Naive thymus-derived CD4-positive, alpha-beta T cell (primary cell): ENCODE measurements at regions of chr10 and their contacts with region 1.

Region 1: GRCh38 chr10:69061305-69062161 is 26.4 kb upstream of the SRGN start:
- DNase-seq: peak in 7 of 9 donors; percentile 17 to 52 (median 50)
- ATAC-seq: peak; percentile 72
- H3K4me3 ChIP-seq: peak overlapping the region; percentile 15
- H3K4me3 Mint-ChIP-seq: peak overlapping the region; percentile 73 to 90 (median 83)
- H3K27ac ChIP-seq: peak overlapping the region; percentile 50
- H3K27ac Mint-ChIP-seq: peak overlapping the region; percentile 70 to 96 (median 90)
- H3K4me1 ChIP-seq: peaks cover 25% of the 10 kb centered on the region in 2 donors
- H3K4me1 Mint-ChIP-seq: peaks cover 33 to 60% (median 38%) of the 10 kb centered on the region in 7 donors
- H3K27me3 ChIP-seq: no peaks in the 10 kb centered on the region
- H3K27me3 Mint-ChIP-seq: no peaks in the 10 kb centered on the region

Region 2: DNA sequence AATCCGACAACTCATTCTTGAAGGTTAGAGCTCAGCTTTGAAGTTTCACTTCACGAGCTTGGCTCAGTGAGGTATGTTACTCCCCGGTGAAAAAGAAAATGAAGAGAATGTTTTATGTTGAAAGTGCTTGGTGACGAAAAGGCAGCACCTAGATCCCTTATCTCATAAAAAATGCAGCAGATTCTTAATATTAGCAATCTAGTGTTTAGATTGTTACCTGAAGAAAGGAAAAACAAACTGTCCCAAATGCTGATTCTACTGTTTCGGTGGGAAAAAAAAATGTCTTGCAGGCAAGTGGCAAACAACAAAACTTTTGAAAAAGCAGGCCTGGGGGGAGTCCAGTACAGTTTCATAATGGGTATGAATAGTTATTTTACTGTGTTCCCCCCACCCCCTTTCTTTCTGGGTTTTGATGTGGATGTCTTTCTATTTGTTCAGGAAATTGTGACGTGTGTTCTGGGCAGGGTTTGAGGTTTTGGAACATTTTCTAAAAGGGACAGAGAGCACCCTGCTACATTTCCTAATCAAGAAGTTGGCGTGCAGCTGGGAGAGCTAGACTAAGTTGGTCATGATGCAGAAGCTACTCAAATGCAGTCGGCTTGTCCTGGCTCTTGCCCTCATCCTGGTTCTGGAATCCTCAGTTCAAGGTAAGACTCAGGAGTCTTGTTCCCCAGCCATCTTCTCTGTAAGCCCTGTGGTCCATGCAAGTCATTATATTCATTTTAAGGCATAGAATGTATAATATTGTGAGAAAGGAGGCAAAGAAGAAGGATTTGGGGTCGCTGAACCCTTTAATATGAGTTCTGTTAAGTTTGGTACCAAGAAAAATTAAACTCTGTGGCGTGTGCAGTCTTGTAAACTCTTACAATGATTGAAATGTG is 26.3 kb after region 1 on chr10 and contains the start of gene SRGN:
- CTCF ChIA-PET with region 1: interaction called, 5 read pairs
- POLR2A ChIA-PET with region 1: interaction called, 7 read pairs
- intact Hi-C with region 1: loop called (anchors 1 to 2 kb)
- DNase-seq: peak; percentile 54 to 94 (median 87)
- ATAC-seq: peak; percentile 76
- H3K4me3 ChIP-seq: peak within 1 kb of the TSS; percentile 84
- H3K4me3 Mint-ChIP-seq: peak within 1 kb of the TSS; percentile 85 to 95 (median 93)
- H3K27ac ChIP-seq: peak within 1 kb of the TSS; percentile 97
- H3K27ac Mint-ChIP-seq: peak within 1 kb of the TSS; percentile 93 to 99 (median 98)
- H3K4me1 ChIP-seq: peaks cover 28 to 46% of the 10 kb centered on the region in 2 donors
- H3K4me1 Mint-ChIP-seq: peaks cover 25 to 66% (median 58%) of the 10 kb centered on the region in 7 donors
- H3K27me3 ChIP-seq: no peaks in the 10 kb centered on the region
- H3K27me3 Mint-ChIP-seq: no peaks in the 10 kb centered on the region
- total RNA-seq, gene SRGN: 66.6 to 748 (median 227) TPM

Region 3: GRCh38 chr10:69092959-69093850 is 31.7 kb after region 1 on chr10:
- CTCF ChIA-PET with region 1: interaction called, 5 read pairs
- POLR2A ChIA-PET with region 1: interaction called, 7 read pairs
- intact Hi-C with region 1: loop called (anchors 1 to 2 kb)
- DNase-seq: peak; percentile 43 to 89 (median 85)
- ATAC-seq: peak; percentile 61
- H3K4me3 ChIP-seq: peak overlapping the region; percentile 19
- H3K4me3 Mint-ChIP-seq: peak overlapping the region in 7 of 10 donors; percentile 4 to 36 (median 15)
- H3K27ac ChIP-seq: peak overlapping the region; percentile 54
- H3K27ac Mint-ChIP-seq: peak overlapping the region; percentile 23 to 90 (median 63)
- H3K4me1 ChIP-seq: peaks cover 28 to 37% of the 10 kb centered on the region in 2 donors
- H3K4me1 Mint-ChIP-seq: peaks cover 23 to 64% (median 55%) of the 10 kb centered on the region in 7 donors
- H3K27me3 ChIP-seq: no peaks in the 10 kb centered on the region
- H3K27me3 Mint-ChIP-seq: no peaks in the 10 kb centered on the region

Region 4: GRCh38 chr10:70283445-70284399 is 1222.2 kb after region 1 on chr10 and contains the start of gene NPFFR1:
- CTCF ChIA-PET with region 1: no interaction called
- POLR2A ChIA-PET with region 1: no interaction called
- intact Hi-C with region 1: no loop called
- DNase-seq: no peak
- ATAC-seq: no peak
- H3K4me3 ChIP-seq: no peak within 1 kb of the TSS
- H3K4me3 Mint-ChIP-seq: peak within 1 kb of the TSS in 2 of 10 donors; percentile 12 to 16
- H3K27ac ChIP-seq: no peak within 1 kb of the TSS
- H3K27ac Mint-ChIP-seq: no peak within 1 kb of the TSS
- H3K4me1 ChIP-seq: no peaks in the 10 kb centered on the region
- H3K4me1 Mint-ChIP-seq: peaks cover 0 to 2% (median 0%) of the 10 kb centered on the region in 7 donors
- H3K27me3 ChIP-seq: peaks cover 0 to 17% of the 10 kb centered on the region in 2 donors
- H3K27me3 Mint-ChIP-seq: peaks cover 54 to 71% (median 56%) of the 10 kb centered on the region in 5 donors
- total RNA-seq, gene NPFFR1: 0.05 TPM in 1 of 5 experiments, not detected in the others